Aorta (tissue), 5 donors: ENCODE measurements at regions of chr16 and their contacts with region 1.

Region 1: DNA sequence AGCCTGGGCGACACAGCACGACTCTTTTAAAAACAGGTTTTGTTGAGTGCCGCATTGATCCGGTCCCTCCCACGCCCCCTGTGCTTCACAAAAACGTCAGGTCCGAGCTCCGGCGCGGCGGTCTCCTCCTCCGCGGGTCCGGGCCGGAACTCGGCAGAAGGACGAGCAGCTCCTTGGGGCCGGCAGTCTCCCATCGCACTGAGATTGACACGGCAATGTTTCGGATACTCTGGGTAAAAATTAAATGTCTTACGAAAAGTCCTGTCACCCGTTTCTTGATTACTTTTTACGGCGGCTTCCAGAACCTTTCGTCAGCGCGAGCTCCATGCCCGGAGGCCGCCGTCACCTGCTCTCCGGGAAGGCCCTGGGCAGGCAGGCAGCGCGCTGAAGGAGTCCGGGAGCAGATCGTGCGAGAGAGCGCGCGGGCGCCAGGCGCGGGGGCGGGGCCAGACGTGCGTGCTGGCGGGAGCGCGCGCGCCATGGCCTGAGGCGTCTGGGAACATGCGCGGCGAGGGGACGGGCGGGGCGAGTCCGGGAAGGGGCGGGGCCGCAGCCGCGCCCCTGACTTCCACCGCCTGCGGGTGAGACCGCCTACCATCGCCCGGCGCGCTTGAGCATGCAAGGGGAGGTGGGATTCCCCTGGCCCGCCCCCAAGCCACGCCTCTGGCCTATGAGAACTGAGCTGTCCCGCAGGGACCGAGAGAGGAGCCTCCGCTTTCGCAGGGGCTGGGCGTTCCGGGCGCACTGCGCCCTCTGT is 11.7 kb upstream of the SRL start:
- DNase-seq: peak; percentile 100
- ATAC-seq: peak; percentile 99
- H3K4me3 ChIP-seq: peak overlapping the region; percentile 13 to 42
- H3K27ac ChIP-seq: peak overlapping the region; percentile 34 to 62
- H3K4me1 ChIP-seq: no peaks in the 10 kb centered on the region
- H3K27me3 ChIP-seq: no peaks in the 10 kb centered on the region

Region 2: GRCh38 chr16:3983081-3983520 is 270.5 kb before region 1 on chr16:
- intact Hi-C with region 1: loop called in 1 of 2 experiments (anchors 5 kb)
- DNase-seq: peak in 1 of 2 donors; percentile 77
- ATAC-seq: peak; percentile 72
- H3K4me3 ChIP-seq: no peak overlapping the region
- H3K27ac ChIP-seq: no peak overlapping the region
- H3K4me1 ChIP-seq: no peaks in the 10 kb centered on the region
- H3K27me3 ChIP-seq: no peaks in the 10 kb centered on the region

Region 3: GRCh38 chr16:4200000-4200780 is 53.4 kb before region 1 on chr16:
- intact Hi-C with region 1: loop called (anchors 1 to 5 kb)
- DNase-seq: peak; percentile 75 to 92
- ATAC-seq: peak; percentile 80
- H3K4me3 ChIP-seq: no peak overlapping the region
- H3K27ac ChIP-seq: no peak overlapping the region
- H3K4me1 ChIP-seq: no peaks in the 10 kb centered on the region
- H3K27me3 ChIP-seq: no peaks in the 10 kb centered on the region

Region 4: DNA sequence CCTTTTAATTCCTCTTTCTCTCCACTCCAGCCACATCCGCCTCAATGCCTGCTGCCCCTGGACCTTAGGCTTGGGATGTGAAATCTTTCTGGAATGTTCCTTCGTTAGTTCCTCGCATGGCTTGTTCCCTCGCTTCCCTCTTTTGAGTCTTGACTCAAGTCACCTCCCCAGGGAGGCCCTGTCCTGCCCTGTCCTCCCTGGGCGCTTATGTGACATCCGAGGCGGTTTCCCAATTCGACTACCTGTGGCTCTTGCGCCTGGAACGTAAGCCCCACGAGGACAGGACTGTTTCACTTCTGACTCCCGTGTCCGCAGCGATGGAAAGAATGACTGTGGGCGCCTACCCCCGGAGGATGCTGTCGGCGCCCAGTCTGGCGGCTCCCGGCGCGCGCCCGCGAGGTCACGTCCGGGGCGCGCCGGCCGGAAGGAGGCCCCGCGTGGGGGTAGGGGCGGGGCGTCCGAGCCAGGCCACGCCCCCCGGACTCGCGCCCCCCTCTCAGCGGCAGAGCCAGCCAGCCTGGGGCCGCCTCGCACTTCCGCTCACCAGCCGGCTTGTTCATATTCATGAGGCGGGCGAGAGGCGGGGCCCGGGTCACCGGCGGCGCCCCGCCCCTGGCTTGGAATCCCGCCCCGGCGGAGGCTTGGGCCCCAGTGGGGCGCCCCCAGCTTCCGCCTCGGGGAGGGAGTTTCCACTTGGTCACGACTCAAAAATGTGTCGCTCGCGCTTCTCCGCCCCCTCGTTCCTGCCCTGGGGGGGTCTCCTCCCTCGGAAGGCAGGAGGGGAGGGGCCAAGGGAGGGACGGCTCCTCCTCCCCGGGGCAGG is 53.9 kb after region 1 on chr16:
- intact Hi-C with region 1: no loop called
- DNase-seq: peak; percentile 96 to 97
- ATAC-seq: peak; percentile 94
- H3K4me3 ChIP-seq: peak overlapping the region; percentile 6
- H3K27ac ChIP-seq: peak overlapping the region; percentile 37 to 72
- H3K4me1 ChIP-seq: no peaks in the 10 kb centered on the region
- H3K27me3 ChIP-seq: no peaks in the 10 kb centered on the region